GM12878 (cell line): ENCODE measurements at regions of chr6 and their contacts with region 1.

Region 1: GRCh38 chr6:106339334-106340029 is 13.9 kb upstream of the ATG5 start:
- DNase-seq: no peak
- ATAC-seq: peak; percentile 94
- H3K4me3 ChIP-seq: no peak overlapping the region
- H3K27ac ChIP-seq: no peak overlapping the region
- H3K4me1 ChIP-seq: no peaks in the 10 kb centered on the region
- H3K27me3 ChIP-seq: no peaks in the 10 kb centered on the region
- CTCF ChIP-seq: peak; percentile 68 to 77 (median 73)
- EP300 ChIP-seq: no peak
- POLR2A ChIP-seq: no peak
- RAD21 ChIP-seq: peak; percentile 57

Region 2: DNA sequence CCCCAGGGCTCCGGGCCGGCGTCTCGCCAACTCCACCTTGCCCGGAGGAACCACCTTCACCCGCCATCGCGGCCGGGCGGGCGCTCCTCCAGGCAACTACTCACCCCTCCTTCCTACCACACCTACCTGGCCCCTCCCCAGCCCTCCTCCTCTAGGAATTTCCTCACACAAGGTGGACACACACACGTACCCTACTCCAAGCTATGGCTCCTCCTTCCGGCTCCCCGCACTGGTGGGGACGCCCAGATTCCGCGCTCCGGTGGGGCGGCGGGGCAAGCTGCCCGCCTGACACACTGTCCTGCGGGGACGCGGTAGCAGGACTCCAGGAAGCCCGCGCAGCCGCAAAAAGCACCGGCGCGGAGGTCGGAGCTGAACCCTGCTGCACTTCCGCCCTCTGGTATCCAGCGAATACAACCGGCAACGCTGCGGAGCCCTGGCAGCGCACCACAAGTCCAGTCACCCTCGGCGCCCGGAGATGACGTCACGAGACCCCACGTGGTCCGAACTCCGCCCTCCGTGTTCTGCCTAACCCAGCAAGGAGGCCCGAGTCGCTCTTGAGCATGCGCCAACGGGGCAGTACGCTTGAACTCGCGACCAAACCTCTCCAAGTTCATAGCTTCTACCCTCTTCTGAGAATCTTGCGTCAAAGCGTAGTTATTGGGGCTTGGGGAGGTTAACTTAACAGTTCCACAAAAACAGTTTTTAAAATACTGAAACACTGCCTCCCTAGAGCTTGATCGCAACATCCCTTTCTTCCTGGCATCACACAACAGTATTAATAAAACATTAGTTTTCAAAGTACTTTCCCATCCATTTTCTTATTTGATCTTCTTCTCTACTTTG is 13.9 kb before region 1 on chr6 and contains the start of gene ATG5:
- CTCF ChIA-PET with region 1: interaction called, 16 read pairs
- POLR2A ChIA-PET with region 1: interaction called, 3 read pairs
- RAD21 ChIA-PET with region 1: interaction called, 5 read pairs
- SMC1A ChIA-PET with region 1: interaction called, 4 read pairs
- in situ Hi-C with region 1: no loop called
- intact Hi-C with region 1: no loop called
- DNase-seq: peak; percentile 97
- ATAC-seq: peak; percentile 97
- H3K4me3 ChIP-seq: peak within 1 kb of the TSS; percentile 79
- H3K27ac ChIP-seq: peak within 1 kb of the TSS; percentile 69
- H3K4me1 ChIP-seq: peaks cover 8% of the 10 kb centered on the region; the same call in 1 of the 2 replicates
- H3K27me3 ChIP-seq: 0 out of 4 replicates have a peak, but pooled peaks cover 0 to 2% of the 10 kb centered on the region in 2 experiments
- CTCF ChIP-seq: no peak
- EP300 ChIP-seq: no peak
- POLR2A ChIP-seq: peak; percentile 96
- RAD21 ChIP-seq: no peak
- polyA plus RNA-seq, gene ATG5: 12.9 to 17.4 TPM

Region 3: GRCh38 chr6:106370639-106371038 is 31.2 kb after region 1 on chr6:
- CTCF ChIA-PET with region 1: interaction called, 12 read pairs
- POLR2A ChIA-PET with region 1: no interaction called
- RAD21 ChIA-PET with region 1: interaction called, 4 read pairs
- SMC1A ChIA-PET with region 1: no interaction called
- in situ Hi-C with region 1: no loop called
- intact Hi-C with region 1: no loop called
- DNase-seq: no peak
- ATAC-seq: no peak
- H3K4me3 ChIP-seq: no peak overlapping the region
- H3K27ac ChIP-seq: no peak overlapping the region
- H3K4me1 ChIP-seq: no peaks in the 10 kb centered on the region
- H3K27me3 ChIP-seq: no peaks in the 10 kb centered on the region; a peak in 1 of 4 replicates
- CTCF ChIP-seq: no peak
- EP300 ChIP-seq: no peak
- POLR2A ChIP-seq: no peak
- RAD21 ChIP-seq: no peak

Region 4: GRCh38 chr6:106568530-106568929 is 229.0 kb after region 1 on chr6:
- CTCF ChIA-PET with region 1: interaction called, 17 read pairs
- POLR2A ChIA-PET with region 1: interaction called, 3 read pairs
- RAD21 ChIA-PET with region 1: interaction called, 7 read pairs
- SMC1A ChIA-PET with region 1: interaction called, 6 read pairs
- in situ Hi-C with region 1: loop called (anchors 5 kb)
- intact Hi-C with region 1: loop called (anchors 1 kb)
- DNase-seq: no peak
- ATAC-seq: no peak
- H3K4me3 ChIP-seq: no peak overlapping the region
- H3K27ac ChIP-seq: no peak overlapping the region
- H3K4me1 ChIP-seq: no peaks in the 10 kb centered on the region
- H3K27me3 ChIP-seq: no peaks in the 10 kb centered on the region
- CTCF ChIP-seq: no peak
- EP300 ChIP-seq: no peak
- POLR2A ChIP-seq: no peak
- RAD21 ChIP-seq: no peak

Region 5: GRCh38 chr6:106939848-106940247 is 600.4 kb after region 1 on chr6:
- CTCF ChIA-PET with region 1: no interaction called
- POLR2A ChIA-PET with region 1: no interaction called
- RAD21 ChIA-PET with region 1: no interaction called
- SMC1A ChIA-PET with region 1: no interaction called
- in situ Hi-C with region 1: no loop called
- intact Hi-C with region 1: no loop called
- DNase-seq: peak; percentile 40
- ATAC-seq: peak; percentile 93
- H3K4me3 ChIP-seq: no peak overlapping the region
- H3K27ac ChIP-seq: no peak overlapping the region; the same call in 1 of the 2 replicates
- H3K4me1 ChIP-seq: peaks cover 10% of the 10 kb centered on the region
- H3K27me3 ChIP-seq: no peaks in the 10 kb centered on the region
- CTCF ChIP-seq: no peak
- EP300 ChIP-seq: no peak
- POLR2A ChIP-seq: no peak
- RAD21 ChIP-seq: no peak

Region 6: DNA sequence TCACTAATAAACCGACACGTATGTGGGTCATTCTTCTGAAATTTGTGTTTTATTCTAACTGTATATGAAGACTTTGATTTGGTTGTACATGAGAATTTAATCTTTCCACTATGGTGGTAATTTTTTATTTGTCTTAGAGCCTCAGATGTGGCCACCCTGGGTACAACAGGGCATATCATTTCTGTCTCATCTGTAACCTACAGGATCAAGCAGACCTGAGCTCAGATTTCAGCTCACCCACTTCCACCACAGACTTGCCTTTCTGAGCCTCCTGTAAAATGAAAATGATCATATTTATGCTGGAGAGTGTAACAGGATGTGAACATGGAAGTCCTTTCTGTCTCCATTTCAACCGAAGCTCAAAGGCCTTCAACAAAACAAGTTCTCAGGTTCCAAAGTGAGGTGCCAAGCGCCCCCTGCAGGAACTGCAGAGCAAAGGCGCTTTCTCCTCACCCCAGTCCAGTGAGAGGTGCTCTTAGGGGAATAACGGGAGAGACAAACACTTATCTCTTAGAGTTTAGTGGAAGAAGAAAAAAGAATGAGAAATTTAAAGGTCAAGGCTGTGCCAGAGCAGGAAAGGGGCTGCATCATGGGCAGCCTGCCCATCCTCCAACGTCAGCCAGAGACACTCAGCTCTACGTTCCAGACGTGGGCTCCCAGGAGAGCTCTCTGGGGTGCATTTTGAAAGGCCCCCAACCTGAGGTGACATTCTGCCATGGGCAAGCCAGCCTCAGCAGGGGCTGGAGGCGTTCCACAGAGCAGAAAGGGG is 658.1 kb after region 1 on chr6:
- CTCF ChIA-PET with region 1: interaction called, 16 read pairs
- POLR2A ChIA-PET with region 1: no interaction called
- RAD21 ChIA-PET with region 1: interaction called, 6 read pairs
- SMC1A ChIA-PET with region 1: interaction called, 6 read pairs
- in situ Hi-C with region 1: no loop called
- intact Hi-C with region 1: loop called (anchors 5 kb)
- DNase-seq: peak; percentile 12
- ATAC-seq: peak; percentile 91
- H3K4me3 ChIP-seq: no peak overlapping the region
- H3K27ac ChIP-seq: no peak overlapping the region
- H3K4me1 ChIP-seq: no peaks in the 10 kb centered on the region
- H3K27me3 ChIP-seq: no peaks in the 10 kb centered on the region
- CTCF ChIP-seq: peak; percentile 81 to 96 (median 91)
- EP300 ChIP-seq: no peak
- POLR2A ChIP-seq: no peak
- RAD21 ChIP-seq: peak; percentile 74